ENCODE measurements at regions of chr5 and their contacts with region 1.

Region 1: GRCh38 chr5:91311697-91312501 is 71.2 kb downstream of the ARRDC3 start:
- DNase-seq: peak; percentile 75 to 87 (median 81)
- H3K4me3 ChIP-seq: peak overlapping the region in 1 of 2 donors; percentile 25
- H3K4me3 Mint-ChIP-seq: peak overlapping the region; percentile 55 to 87 (median 74)
- H3K27ac ChIP-seq: peak overlapping the region; percentile 43
- H3K27ac Mint-ChIP-seq: peak overlapping the region; percentile 94 to 98 (median 97)
- H3K4me1 ChIP-seq: peaks cover 46% of the 10 kb centered on the region
- H3K4me1 Mint-ChIP-seq: peaks cover 35 to 53% (median 36%) of the 10 kb centered on the region in 4 donors
- H3K27me3 ChIP-seq: no peaks in the 10 kb centered on the region
- H3K27me3 Mint-ChIP-seq: peaks cover 0 to 2% of the 10 kb centered on the region in 2 donors

Region 2: GRCh38 chr5:91101600-91102379 is 210.1 kb before region 1 on chr5:
- CTCF ChIA-PET with region 1: no interaction called
- POLR2A ChIA-PET with region 1: no interaction called
- intact Hi-C with region 1: loop called (anchors 5 kb)
- DNase-seq: peak; percentile 23 to 49 (median 35)
- H3K4me3 ChIP-seq: no peak overlapping the region
- H3K4me3 Mint-ChIP-seq: no peak overlapping the region
- H3K27ac ChIP-seq: no peak overlapping the region
- H3K27ac Mint-ChIP-seq: no peak overlapping the region
- H3K4me1 ChIP-seq: no peaks in the 10 kb centered on the region
- H3K4me1 Mint-ChIP-seq: no peaks in the 10 kb centered on the region
- H3K27me3 ChIP-seq: no peaks in the 10 kb centered on the region
- H3K27me3 Mint-ChIP-seq: peaks cover 4 to 5% of the 10 kb centered on the region in 2 donors

Region 3: GRCh38 chr5:91280362-91281269 is 31.3 kb before region 1 on chr5:
- CTCF ChIA-PET with region 1: interaction called, 5 read pairs
- POLR2A ChIA-PET with region 1: interaction called, 43 read pairs
- intact Hi-C with region 1: loop called (anchors 1 kb)
- DNase-seq: peak; percentile 76 to 90 (median 80)
- H3K4me3 ChIP-seq: peak overlapping the region; percentile 74 to 91
- H3K4me3 Mint-ChIP-seq: peak overlapping the region; percentile 85 to 99 (median 93)
- H3K27ac ChIP-seq: peak overlapping the region; percentile 37
- H3K27ac Mint-ChIP-seq: peak overlapping the region; percentile 80 to 97 (median 94)
- H3K4me1 ChIP-seq: peaks cover 14% of the 10 kb centered on the region
- H3K4me1 Mint-ChIP-seq: peaks cover 13 to 24% (median 19%) of the 10 kb centered on the region in 4 donors
- H3K27me3 ChIP-seq: no peaks in the 10 kb centered on the region
- H3K27me3 Mint-ChIP-seq: no peaks in the 10 kb centered on the region

Measured in CD4-positive, alpha-beta memory T cell (primary cell).